Mammary epithelial cell (primary cell): ENCODE measurements at regions of chr17 and their contacts with region 1.

Region 1: DNA sequence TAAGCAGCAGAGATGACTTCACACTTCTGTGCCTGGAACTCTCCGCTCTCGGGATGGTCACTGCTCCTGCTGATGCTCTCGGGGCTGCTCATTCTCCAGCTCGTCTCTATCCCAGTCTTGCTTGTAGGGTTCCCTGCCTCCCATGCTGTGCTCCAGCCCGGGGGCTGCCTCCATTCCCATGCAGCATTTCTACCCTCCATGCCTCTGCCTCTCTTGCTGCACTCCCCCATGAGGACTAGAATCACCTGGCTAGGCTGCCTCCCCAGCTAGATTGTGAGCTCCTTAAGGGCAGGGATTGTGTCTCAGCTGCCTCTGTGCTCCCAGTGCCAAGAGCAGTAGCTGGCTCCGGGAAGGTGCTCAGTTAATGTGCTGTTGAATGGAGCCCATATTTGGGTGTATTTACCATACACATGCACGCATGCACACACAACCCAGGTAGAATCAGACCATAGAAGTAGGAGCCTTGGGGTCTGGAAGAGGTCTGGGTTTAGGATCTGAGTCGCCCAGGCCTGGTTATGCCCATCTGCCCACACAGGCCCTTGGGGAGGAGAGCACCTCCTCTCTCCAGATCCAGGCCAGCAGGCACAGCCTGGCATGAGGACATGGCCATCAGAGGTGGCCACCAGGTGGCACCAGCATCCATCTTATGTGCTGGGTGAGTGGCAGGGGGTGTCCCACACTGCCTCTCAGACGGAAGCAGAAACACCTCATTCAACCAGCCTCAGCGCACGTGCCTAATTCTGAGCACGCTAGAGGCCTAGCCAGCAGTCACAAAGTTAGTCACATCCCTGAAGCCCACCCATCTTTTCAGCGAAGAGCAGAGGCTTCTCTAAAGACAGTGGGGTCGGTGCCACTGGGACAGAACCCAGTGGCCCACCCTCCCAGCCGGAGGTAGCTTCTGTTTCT is 9.3 kb downstream of the GIT1 start:
- DNase-seq: peak; percentile 73
- H3K4me3 ChIP-seq: no peak overlapping the region
- H3K27ac ChIP-seq: no peak overlapping the region
- H3K4me1 ChIP-seq: peaks cover 50% of the 10 kb centered on the region
- H3K27me3 ChIP-seq: no peaks in the 10 kb centered on the region
- CTCF ChIP-seq: peak; percentile 80 to 97

Region 2: GRCh38 chr17:29180034-29180787 is 399.9 kb before region 1 on chr17 and contains the start of gene MYO18A:
- CTCF ChIA-PET with region 1: no interaction called
- dilution Hi-C with region 1: no loop called
- in situ Hi-C with region 1: no loop called
- intact Hi-C with region 1: loop called (anchors 5 kb)
- DNase-seq: peak; percentile 78
- H3K4me3 ChIP-seq: peak within 1 kb of the TSS; percentile 39 to 66 (median 56)
- H3K27ac ChIP-seq: peak within 1 kb of the TSS; percentile 95
- H3K4me1 ChIP-seq: peaks cover 47% of the 10 kb centered on the region
- H3K27me3 ChIP-seq: no peaks in the 10 kb centered on the region
- CTCF ChIP-seq: peak; percentile 63 to 83
- total RNA-seq, gene MYO18A: 62.3 to 102 TPM

Region 3: DNA sequence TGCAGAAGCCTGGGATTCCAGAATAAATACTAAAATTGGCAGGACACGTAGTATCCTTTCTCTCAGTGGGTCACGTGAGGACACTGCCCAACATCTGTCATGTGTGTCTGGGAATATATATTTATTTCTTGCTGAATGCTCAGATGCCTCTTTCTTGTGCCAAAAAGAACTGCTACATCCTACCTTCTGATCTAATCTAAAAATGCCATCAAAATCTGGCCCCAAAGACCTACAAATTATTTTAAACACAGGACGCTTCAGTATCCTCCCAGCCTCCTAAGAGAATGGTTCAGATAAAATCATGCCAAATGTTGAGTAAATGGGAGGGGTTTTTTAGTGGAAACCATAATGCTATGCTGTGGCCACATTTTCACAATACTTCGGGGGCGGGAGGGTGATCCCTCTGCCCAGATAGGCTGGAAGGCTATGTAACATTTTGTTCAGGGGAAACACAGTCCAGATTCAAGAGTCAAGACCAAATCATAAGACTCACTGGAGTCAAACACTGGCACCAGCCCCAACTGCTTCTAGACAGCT is 65.5 kb after region 1 on chr17:
- CTCF ChIA-PET with region 1: no interaction called
- dilution Hi-C with region 1: loop called (anchors 5 kb)
- in situ Hi-C with region 1: no loop called
- intact Hi-C with region 1: no loop called
- DNase-seq: peak; percentile 75
- H3K4me3 ChIP-seq: no peak overlapping the region
- H3K27ac ChIP-seq: no peak overlapping the region
- H3K4me1 ChIP-seq: peaks cover 9% of the 10 kb centered on the region
- H3K27me3 ChIP-seq: no peaks in the 10 kb centered on the region
- CTCF ChIP-seq: no peak

Region 4: GRCh38 chr17:29659155-29659554 is 79.0 kb after region 1 on chr17:
- CTCF ChIA-PET with region 1: no interaction called
- dilution Hi-C with region 1: no loop called
- in situ Hi-C with region 1: no loop called
- intact Hi-C with region 1: no loop called
- DNase-seq: no peak
- H3K4me3 ChIP-seq: no peak overlapping the region
- H3K27ac ChIP-seq: no peak overlapping the region
- H3K4me1 ChIP-seq: no peaks in the 10 kb centered on the region
- H3K27me3 ChIP-seq: no peaks in the 10 kb centered on the region
- CTCF ChIP-seq: no peak

Region 5: DNA sequence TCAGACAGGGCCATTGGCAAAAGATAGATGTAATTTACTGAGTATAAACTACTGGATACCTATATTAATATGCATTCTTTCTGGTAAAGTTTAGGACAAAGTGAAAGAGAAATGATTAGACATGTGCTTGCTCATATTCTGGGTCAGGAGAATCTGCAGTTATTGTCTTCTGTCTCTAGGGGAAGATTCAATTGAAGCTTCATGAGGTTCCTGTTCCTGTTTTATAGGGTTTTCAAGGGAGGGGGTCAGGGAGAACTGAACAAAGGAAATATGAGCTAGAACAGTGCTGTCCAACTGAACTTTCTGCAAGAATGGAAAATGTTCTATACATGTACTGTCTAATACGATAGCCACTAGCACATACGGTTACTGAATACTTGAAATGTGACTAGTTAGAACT is 101.9 kb after region 1 on chr17:
- CTCF ChIA-PET with region 1: no interaction called
- dilution Hi-C with region 1: no loop called
- in situ Hi-C with region 1: no loop called
- intact Hi-C with region 1: no loop called
- DNase-seq: no peak
- H3K4me3 ChIP-seq: no peak overlapping the region
- H3K27ac ChIP-seq: no peak overlapping the region
- H3K4me1 ChIP-seq: no peaks in the 10 kb centered on the region
- H3K27me3 ChIP-seq: no peaks in the 10 kb centered on the region
- CTCF ChIP-seq: no peak

Region 6: DNA sequence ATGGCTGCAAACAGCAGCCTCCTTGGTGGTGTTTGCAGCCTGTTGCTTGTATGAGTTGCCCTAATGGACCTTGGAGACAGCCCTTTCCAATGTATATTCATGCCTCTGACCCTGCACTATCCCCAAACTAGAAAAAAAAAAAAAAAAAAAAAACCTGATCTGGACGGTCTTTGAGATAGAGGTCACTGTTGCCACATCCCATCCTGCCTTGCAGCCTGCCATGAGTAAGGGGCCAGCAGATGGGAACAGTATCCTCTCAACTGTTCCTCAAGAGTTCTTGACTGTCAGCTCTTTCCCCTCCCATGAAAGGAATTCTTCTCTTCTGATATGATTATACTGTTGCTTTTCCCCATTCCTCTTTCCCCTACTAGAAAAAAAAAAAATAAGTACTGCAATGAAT is 197.5 kb after region 1 on chr17:
- CTCF ChIA-PET with region 1: no interaction called
- dilution Hi-C with region 1: no loop called
- in situ Hi-C with region 1: no loop called
- intact Hi-C with region 1: loop called (anchors 1 kb)
- DNase-seq: no peak
- H3K4me3 ChIP-seq: no peak overlapping the region
- H3K27ac ChIP-seq: no peak overlapping the region
- H3K4me1 ChIP-seq: no peaks in the 10 kb centered on the region
- H3K27me3 ChIP-seq: no peaks in the 10 kb centered on the region
- CTCF ChIP-seq: no peak

Region 7: DNA sequence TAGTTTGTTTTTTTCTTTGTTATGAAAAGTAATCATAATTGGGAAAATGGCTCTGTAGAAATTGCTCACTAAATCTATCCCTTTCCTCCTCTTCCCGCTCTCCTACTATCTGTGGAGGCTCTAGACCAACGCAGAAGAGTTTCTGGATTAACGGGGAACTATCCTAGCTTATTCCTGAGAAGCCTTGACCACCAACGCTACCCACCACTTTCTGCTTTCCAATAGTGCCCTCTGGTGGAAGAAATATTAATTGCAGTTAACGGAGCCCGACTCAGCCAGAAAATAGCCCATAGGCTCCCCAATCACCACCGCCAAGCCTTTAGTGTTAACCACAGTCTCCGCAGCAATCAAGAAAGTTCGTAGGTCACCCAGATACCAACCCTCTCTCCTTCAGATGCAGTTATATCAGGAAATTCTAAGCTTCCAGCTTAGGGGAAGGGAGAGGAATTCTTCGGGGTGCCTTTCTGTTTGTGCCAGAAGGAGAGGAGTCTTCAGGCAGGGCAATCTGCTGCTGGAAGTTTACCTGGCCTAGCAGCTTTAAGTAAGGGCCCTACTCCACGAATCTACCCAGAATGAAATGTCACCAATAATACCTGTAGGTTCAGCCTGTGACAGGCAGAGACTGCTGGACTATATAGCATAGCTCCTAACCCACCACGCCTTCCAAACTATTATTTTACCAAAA is 513.5 kb after region 1 on chr17:
- CTCF ChIA-PET with region 1: interaction called, 5 read pairs
- dilution Hi-C with region 1: no loop called
- in situ Hi-C with region 1: no loop called
- intact Hi-C with region 1: loop called (anchors 5 kb)
- DNase-seq: peak; percentile 43
- H3K4me3 ChIP-seq: no peak overlapping the region
- H3K27ac ChIP-seq: no peak overlapping the region
- H3K4me1 ChIP-seq: no peaks in the 10 kb centered on the region
- H3K27me3 ChIP-seq: no peaks in the 10 kb centered on the region
- CTCF ChIP-seq: peak; percentile 62 to 70